Endothelial cell of umbilical vein (primary cell): ENCODE measurements at regions of chr7 and their contacts with region 1.

Region 1: GRCh38 chr7:107501593-107501992 is 31.7 kb downstream of the GPR22 start:
- DNase-seq: peak; percentile 64
- H3K4me3 ChIP-seq: no peak overlapping the region
- H3K27ac ChIP-seq: no peak overlapping the region
- H3K4me1 ChIP-seq: peaks cover 2% of the 10 kb centered on the region
- H3K27me3 ChIP-seq: no peaks in the 10 kb centered on the region
- CTCF ChIP-seq: peak; percentile 36
- POLR2A ChIP-seq: no peak

Region 2: GRCh38 chr7:107194049-107194448 is 307.5 kb before region 1 on chr7:
- CTCF ChIA-PET with region 1: interaction called, 26 read pairs
- POLR2A ChIA-PET with region 1: no interaction called
- dilution Hi-C with region 1: no loop called
- intact Hi-C with region 1: no loop called
- DNase-seq: no peak
- H3K4me3 ChIP-seq: no peak overlapping the region
- H3K27ac ChIP-seq: no peak overlapping the region
- H3K4me1 ChIP-seq: peaks cover 4% of the 10 kb centered on the region
- H3K27me3 ChIP-seq: no peaks in the 10 kb centered on the region
- CTCF ChIP-seq: no peak
- POLR2A ChIP-seq: no peak

Region 3: GRCh38 chr7:107201795-107202450 is 299.7 kb before region 1 on chr7:
- CTCF ChIA-PET with region 1: interaction called, 17 read pairs
- POLR2A ChIA-PET with region 1: no interaction called
- dilution Hi-C with region 1: no loop called
- intact Hi-C with region 1: loop called (anchors 1 kb)
- DNase-seq: peak; percentile 42
- H3K4me3 ChIP-seq: no peak overlapping the region
- H3K27ac ChIP-seq: no peak overlapping the region
- H3K4me1 ChIP-seq: no peaks in the 10 kb centered on the region
- H3K27me3 ChIP-seq: no peaks in the 10 kb centered on the region
- CTCF ChIP-seq: peak; percentile 42 to 45
- POLR2A ChIP-seq: no peak

Region 4: GRCh38 chr7:107242267-107242666 is 259.3 kb before region 1 on chr7:
- CTCF ChIA-PET with region 1: no interaction called
- POLR2A ChIA-PET with region 1: no interaction called
- dilution Hi-C with region 1: no loop called
- intact Hi-C with region 1: no loop called
- DNase-seq: no peak
- H3K4me3 ChIP-seq: no peak overlapping the region
- H3K27ac ChIP-seq: no peak overlapping the region
- H3K4me1 ChIP-seq: no peaks in the 10 kb centered on the region
- H3K27me3 ChIP-seq: no peaks in the 10 kb centered on the region
- CTCF ChIP-seq: no peak
- POLR2A ChIP-seq: no peak

Region 5: GRCh38 chr7:107277331-107277730 is 224.3 kb before region 1 on chr7:
- CTCF ChIA-PET with region 1: no interaction called
- POLR2A ChIA-PET with region 1: no interaction called
- dilution Hi-C with region 1: no loop called
- intact Hi-C with region 1: no loop called
- DNase-seq: no peak
- H3K4me3 ChIP-seq: no peak overlapping the region
- H3K27ac ChIP-seq: no peak overlapping the region
- H3K4me1 ChIP-seq: no peaks in the 10 kb centered on the region
- H3K27me3 ChIP-seq: no peaks in the 10 kb centered on the region
- CTCF ChIP-seq: no peak
- POLR2A ChIP-seq: no peak

Region 6: DNA sequence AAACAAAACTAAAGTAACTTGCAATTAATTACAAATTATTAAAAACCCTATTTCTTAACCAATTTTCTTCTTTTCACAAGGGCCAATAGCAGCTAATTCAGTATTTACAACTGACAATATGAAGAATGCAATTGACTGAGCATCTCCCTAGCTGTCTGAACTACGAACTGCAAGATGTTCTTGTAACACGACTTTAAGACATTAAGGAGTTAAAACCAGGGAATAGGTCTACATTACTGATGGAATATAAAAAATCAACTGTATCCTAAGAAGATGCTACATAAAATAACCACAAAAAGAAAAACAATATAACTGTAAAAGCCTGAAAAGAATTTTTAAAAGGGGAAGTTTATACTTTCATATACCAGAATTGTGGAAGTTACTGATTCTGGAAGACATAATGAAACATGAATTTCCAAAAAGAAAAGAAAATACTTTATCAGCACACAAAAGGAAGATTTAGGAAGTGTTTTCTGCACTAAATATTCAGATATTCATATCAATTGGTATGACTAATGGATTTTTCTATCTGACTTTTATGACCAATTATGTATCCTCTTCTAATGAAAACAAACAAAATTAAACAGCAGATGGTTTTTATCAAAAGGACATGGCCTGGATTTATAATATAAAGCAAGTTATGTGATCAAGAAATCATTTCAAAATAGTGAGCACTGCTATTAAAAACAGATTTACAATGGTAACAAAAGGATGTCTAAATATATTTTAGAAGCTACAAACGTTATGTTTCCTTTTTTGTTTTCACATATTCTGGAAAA is 30.1 kb before region 1 on chr7:
- CTCF ChIA-PET with region 1: interaction called, 14 read pairs
- POLR2A ChIA-PET with region 1: no interaction called
- dilution Hi-C with region 1: no loop called
- intact Hi-C with region 1: no loop called
- DNase-seq: peak; percentile 35
- H3K4me3 ChIP-seq: no peak overlapping the region
- H3K27ac ChIP-seq: no peak overlapping the region
- H3K4me1 ChIP-seq: peaks cover 12% of the 10 kb centered on the region
- H3K27me3 ChIP-seq: no peaks in the 10 kb centered on the region
- CTCF ChIP-seq: no peak
- POLR2A ChIP-seq: no peak

Region 7: GRCh38 chr7:107480932-107481331 is 20.7 kb before region 1 on chr7:
- CTCF ChIA-PET with region 1: interaction called, 10 read pairs
- POLR2A ChIA-PET with region 1: no interaction called
- dilution Hi-C with region 1: no loop called
- intact Hi-C with region 1: no loop called
- DNase-seq: no peak
- H3K4me3 ChIP-seq: no peak overlapping the region
- H3K27ac ChIP-seq: no peak overlapping the region
- H3K4me1 ChIP-seq: no peaks in the 10 kb centered on the region
- H3K27me3 ChIP-seq: no peaks in the 10 kb centered on the region
- CTCF ChIP-seq: no peak
- POLR2A ChIP-seq: no peak